Ascending aorta (tissue), 2 donors: ENCODE measurements at regions of chr16 and their contacts with region 1.

Region 1: GRCh38 chr16:88925101-88925887 is 51.7 kb downstream of the CBFA2T3 start:
- DNase-seq: peak in 1 of 2 donors; percentile 76
- H3K4me3 ChIP-seq: peak overlapping the region in 1 of 2 donors; percentile 36
- H3K27ac ChIP-seq: no peak overlapping the region
- H3K4me1 ChIP-seq: peaks cover 3 to 11% of the 10 kb centered on the region in 2 donors
- H3K27me3 ChIP-seq: no peaks in the 10 kb centered on the region
- CTCF ChIP-seq: peak in 1 of 3 experiments; percentile 20

Region 2: DNA sequence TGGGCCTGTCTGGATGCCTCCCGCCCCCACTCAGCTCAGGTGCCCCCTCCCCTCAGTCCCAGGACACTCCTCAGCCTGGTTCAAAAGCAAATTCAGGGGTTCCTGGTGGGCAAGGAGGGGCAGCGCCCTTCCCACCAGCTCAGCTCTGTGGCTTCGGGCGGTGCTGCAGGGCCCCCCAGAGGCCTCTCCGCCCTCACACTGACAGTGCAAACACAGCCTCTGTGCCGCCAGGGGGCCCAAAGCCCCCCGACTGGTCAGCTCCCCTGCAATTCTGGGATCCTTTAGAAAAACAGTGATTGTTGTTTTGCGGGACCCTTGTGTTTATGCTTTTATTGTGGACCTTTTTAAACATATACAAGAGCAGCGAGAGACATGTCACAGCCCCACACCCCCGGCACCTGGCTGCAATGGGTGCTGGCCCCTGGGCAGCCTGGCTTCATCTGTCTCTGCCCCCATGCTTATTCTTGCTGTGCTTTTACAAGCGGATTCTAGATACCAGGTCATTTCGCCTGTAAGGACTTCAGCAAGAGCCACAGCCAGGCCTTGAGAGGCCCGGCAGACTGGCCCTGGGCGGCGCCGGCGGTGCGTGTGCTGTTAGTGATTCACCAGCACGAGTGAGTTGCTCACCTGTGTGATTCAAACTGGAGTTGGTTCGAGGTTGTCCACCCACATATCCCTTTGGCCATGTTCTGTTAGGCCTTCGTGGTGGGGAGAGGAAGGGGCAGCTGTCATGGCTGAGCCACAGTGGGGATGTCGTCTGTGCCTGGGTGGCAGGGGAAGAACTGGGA is 521.3 kb before region 1 on chr16:
- intact Hi-C with region 1: loop called (anchors 5 kb)
- DNase-seq: no peak
- H3K4me3 ChIP-seq: no peak overlapping the region
- H3K27ac ChIP-seq: no peak overlapping the region
- H3K4me1 ChIP-seq: peaks cover 0 to 13% of the 10 kb centered on the region in 2 donors
- H3K27me3 ChIP-seq: no peaks in the 10 kb centered on the region
- CTCF ChIP-seq: no peak

Region 3: DNA sequence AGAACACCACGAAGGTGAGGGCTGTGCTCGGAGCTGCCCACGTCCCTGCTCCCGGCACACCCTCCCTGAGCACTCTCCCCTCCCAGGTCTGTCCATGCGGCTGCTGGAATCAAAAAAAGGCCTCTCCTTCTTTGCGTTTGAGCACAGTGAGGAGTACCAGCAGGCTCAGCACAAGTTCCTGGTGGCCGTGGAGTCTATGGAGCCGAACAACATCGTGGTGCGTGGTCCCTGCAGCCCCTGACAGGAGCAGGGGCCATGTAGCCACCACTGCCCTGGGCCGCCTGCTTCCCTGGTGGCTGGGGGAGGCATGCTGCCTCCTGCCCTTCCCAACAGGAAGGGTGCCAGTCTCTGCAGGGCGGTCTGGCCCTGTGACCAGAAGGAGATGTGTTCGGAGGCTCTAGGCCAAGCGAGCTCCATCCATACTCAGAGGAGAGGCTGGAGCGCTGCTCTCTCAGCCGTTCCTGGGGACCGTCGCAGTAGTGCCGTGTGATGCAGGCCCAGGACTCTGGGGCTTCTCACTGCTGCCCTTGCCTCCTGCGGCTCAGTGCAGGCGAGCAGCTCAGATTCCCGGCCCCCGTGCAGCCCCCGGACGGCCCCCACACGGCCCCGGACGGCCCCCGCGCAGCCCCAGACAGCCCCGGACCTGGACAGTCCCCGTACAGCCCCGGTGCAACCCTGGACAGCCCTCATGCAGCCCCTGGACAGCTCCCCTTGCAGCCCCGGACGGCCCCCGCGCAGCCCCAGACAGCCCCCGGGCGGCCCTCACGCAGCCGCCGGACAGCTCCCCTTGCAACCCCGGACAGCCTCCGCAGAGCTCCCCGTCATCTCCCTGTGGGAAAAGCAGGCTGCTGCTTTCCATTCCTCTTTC is 968.6 kb after region 1 on chr16:
- intact Hi-C with region 1: no loop called
- DNase-seq: no peak
- H3K4me3 ChIP-seq: no peak overlapping the region
- H3K27ac ChIP-seq: no peak overlapping the region
- H3K4me1 ChIP-seq: no peaks in the 10 kb centered on the region
- H3K27me3 ChIP-seq: no peaks in the 10 kb centered on the region
- CTCF ChIP-seq: no peak